Activated B cell treated with CpG ODN at 0.5 μM for 24 hours (primary cell): ENCODE measurements at regions of chr12 and their contacts with region 1.

Region 1: DNA sequence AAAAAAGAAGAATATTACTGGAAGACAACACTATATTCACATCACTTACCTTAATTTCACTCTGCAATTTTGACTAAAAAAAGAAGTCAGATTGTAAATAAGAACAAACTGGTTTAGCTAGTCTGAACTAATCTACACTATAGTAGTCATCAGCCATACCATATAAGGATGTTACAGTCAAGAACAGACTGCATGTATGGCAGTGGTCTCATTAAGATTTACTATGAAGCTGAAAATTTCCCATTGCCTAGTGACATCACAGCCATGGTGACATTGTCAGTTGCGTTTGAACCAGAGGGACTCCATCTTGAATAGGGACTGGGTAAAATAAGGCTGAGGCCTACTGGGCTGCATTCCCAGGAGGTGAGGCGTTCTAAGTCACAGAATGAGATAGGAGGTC is 51.4 kb downstream of the OSBPL8 start:
- DNase-seq: no peak
- ATAC-seq: no peak
- H3K4me3 Mint-ChIP-seq: no peak overlapping the region
- H3K27ac Mint-ChIP-seq: no peak overlapping the region
- H3K4me1 Mint-ChIP-seq: peaks cover 48% of the 10 kb centered on the region
- H3K27me3 Mint-ChIP-seq: no peaks in the 10 kb centered on the region
- CTCF ChIP-seq: no peak

Region 2: DNA sequence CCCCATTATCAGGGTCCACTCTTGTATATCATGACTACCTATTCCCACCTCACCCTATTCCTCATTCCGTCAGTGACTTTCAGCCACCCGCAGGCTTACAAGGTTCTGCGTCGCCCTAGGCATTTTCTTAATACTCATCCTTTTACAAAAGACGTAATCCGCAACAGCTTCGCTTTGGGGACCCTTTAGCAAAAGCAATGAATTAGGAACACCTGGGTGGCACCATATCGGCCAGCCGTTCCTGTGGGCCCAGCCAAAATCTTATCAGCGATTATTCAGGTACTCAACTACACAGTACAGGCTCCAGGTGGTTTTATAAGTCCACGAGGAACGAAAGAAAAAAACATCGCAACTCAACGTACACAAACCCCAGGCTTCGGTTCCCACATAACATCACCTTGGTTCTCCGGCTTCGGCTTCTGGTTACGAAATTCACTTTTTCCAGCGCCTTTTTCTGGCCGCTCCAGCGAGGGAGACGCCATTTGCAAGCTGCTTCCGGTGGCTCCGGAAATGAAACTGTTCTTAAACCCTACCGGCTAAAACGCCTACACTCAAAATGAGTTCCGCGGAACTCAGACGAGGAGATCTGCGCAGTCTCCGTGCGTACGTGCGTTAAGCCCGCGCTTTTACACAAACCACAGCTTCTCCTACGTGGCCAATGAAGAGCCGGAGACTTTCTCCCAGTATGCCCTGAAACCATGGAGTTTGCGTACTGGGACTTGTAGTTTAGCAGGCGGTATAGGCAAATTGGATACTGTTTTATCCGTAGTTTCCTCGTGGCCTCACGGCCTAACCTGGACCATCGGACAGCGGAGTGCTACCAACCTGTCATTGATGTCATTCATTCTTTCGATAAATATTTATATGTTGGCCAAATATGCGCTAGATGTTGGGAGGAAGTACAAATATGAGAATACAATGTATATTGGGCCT is 996.8 kb before region 1 on chr12 and contains the start of gene KRR1:
- CTCF ChIA-PET with region 1: no interaction called
- POLR2A ChIA-PET with region 1: interaction called, 4 read pairs
- intact Hi-C with region 1: loop called (anchors 2 kb)
- DNase-seq: peak; percentile 72
- ATAC-seq: peak; percentile 96
- H3K4me3 Mint-ChIP-seq: peak within 1 kb of the TSS; percentile 99
- H3K27ac Mint-ChIP-seq: peak within 1 kb of the TSS; percentile 99
- H3K4me1 Mint-ChIP-seq: peaks cover 27% of the 10 kb centered on the region
- H3K27me3 Mint-ChIP-seq: no peaks in the 10 kb centered on the region
- CTCF ChIP-seq: no peak
- total RNA-seq, gene KRR1: 75.0 and 85.1 TPM in 2 replicates

Region 3: GRCh38 chr12:75759842-75760572 is 748.2 kb before region 1 on chr12:
- CTCF ChIA-PET with region 1: no interaction called
- POLR2A ChIA-PET with region 1: no interaction called
- intact Hi-C with region 1: no loop called
- DNase-seq: no peak
- ATAC-seq: no peak
- H3K4me3 Mint-ChIP-seq: no peak overlapping the region
- H3K27ac Mint-ChIP-seq: no peak overlapping the region
- H3K4me1 Mint-ChIP-seq: no peaks in the 10 kb centered on the region
- H3K27me3 Mint-ChIP-seq: peaks cover 2% of the 10 kb centered on the region
- CTCF ChIP-seq: no peak

Region 4: GRCh38 chr12:76422543-76423438 is 85.4 kb before region 1 on chr12:
- CTCF ChIA-PET with region 1: no interaction called
- POLR2A ChIA-PET with region 1: no interaction called
- intact Hi-C with region 1: no loop called
- DNase-seq: no peak
- ATAC-seq: no peak
- H3K4me3 Mint-ChIP-seq: no peak overlapping the region
- H3K27ac Mint-ChIP-seq: no peak overlapping the region
- H3K4me1 Mint-ChIP-seq: peaks cover 11% of the 10 kb centered on the region
- H3K27me3 Mint-ChIP-seq: no peaks in the 10 kb centered on the region
- CTCF ChIP-seq: no peak

Region 5: GRCh38 chr12:76470028-76470939 is 37.9 kb before region 1 on chr12:
- CTCF ChIA-PET with region 1: no interaction called
- POLR2A ChIA-PET with region 1: interaction called, 3 read pairs
- intact Hi-C with region 1: loop called (anchors 2 kb)
- DNase-seq: no peak
- ATAC-seq: peak; percentile 84
- H3K4me3 Mint-ChIP-seq: no peak overlapping the region
- H3K27ac Mint-ChIP-seq: no peak overlapping the region
- H3K4me1 Mint-ChIP-seq: peaks cover 12% of the 10 kb centered on the region
- H3K27me3 Mint-ChIP-seq: no peaks in the 10 kb centered on the region
- CTCF ChIP-seq: no peak

Region 6: GRCh38 chr12:76495556-76495955 is 12.6 kb before region 1 on chr12:
- CTCF ChIA-PET with region 1: no interaction called
- POLR2A ChIA-PET with region 1: no interaction called
- intact Hi-C with region 1: loop called (anchors 2 kb)
- DNase-seq: no peak
- ATAC-seq: no peak
- H3K4me3 Mint-ChIP-seq: no peak overlapping the region
- H3K27ac Mint-ChIP-seq: no peak overlapping the region
- H3K4me1 Mint-ChIP-seq: peaks cover 4% of the 10 kb centered on the region
- H3K27me3 Mint-ChIP-seq: no peaks in the 10 kb centered on the region
- CTCF ChIP-seq: no peak

Region 7: GRCh38 chr12:76551482-76551888 is 43.3 kb after region 1 on chr12:
- CTCF ChIA-PET with region 1: interaction called, 3 read pairs
- POLR2A ChIA-PET with region 1: interaction called, 9 read pairs
- intact Hi-C with region 1: loop called (anchors 1 kb)
- DNase-seq: no peak
- ATAC-seq: peak; percentile 61
- H3K4me3 Mint-ChIP-seq: peak overlapping the region; percentile 37
- H3K27ac Mint-ChIP-seq: peak overlapping the region; percentile 38
- H3K4me1 Mint-ChIP-seq: peaks cover 92% of the 10 kb centered on the region
- H3K27me3 Mint-ChIP-seq: no peaks in the 10 kb centered on the region
- CTCF ChIP-seq: no peak

Region 8: DNA sequence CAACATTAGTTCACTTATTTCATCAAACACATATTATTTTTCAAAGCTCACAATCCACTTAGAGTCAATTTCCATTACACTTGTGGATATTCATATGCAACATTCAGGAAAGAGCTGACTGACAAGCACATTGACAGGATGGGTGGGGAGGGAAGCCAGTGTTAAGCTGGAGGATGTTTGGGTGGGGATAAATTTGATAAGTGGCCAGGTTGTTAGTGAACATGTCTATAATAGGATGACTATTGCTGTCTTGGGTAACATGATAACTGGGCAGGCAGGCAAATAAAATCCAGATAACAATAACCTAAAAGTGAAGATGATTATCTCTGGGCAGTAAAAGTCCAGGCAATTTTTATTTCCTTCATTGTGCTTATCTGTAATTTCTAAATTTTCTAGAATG is 125.2 kb after region 1 on chr12:
- CTCF ChIA-PET with region 1: no interaction called
- POLR2A ChIA-PET with region 1: no interaction called
- intact Hi-C with region 1: no loop called
- DNase-seq: no peak
- ATAC-seq: no peak
- H3K4me3 Mint-ChIP-seq: no peak overlapping the region
- H3K27ac Mint-ChIP-seq: no peak overlapping the region
- H3K4me1 Mint-ChIP-seq: no peaks in the 10 kb centered on the region
- H3K27me3 Mint-ChIP-seq: no peaks in the 10 kb centered on the region
- CTCF ChIP-seq: no peak